ENCODE measurements at regions of chr5 and their contacts with region 1.

Region 1: GRCh38 chr5:31186672-31187267 is 6.7 kb upstream of the CDH6 start:
- H3K4me3 ChIP-seq: no peak overlapping the region
- H3K27ac ChIP-seq: no peak overlapping the region
- H3K4me1 ChIP-seq: no peaks in the 10 kb centered on the region
- CTCF ChIP-seq: no peak

Region 2: DNA sequence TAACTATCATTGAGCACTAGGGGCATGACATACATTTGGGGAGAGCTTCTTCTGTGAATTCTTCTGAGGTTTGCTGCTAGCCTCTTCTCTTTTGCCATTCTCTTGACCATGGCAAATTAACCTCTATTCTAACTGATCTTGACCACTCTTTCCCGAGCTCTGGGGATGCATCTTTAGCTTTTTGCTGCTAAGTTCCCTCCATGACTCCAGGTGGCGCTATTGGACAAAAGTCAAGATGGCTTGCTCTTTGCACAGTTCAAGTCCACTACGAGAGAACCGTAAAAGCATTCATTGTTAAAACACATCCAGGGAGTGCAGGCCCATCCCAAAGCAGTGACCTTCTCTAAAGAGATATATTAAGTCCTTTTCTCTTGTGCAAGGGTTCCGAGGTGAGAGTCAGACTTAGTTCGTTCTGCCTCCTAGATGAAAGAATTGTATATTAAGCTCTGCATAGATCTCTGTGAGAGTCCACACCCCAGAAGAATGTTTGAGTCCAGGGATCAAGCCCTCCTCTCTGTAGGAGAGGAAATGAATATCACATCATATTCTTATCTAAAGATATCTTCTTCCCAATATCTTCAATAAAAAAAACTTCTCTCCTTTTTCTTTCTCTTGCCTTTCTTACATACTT is 1146.2 kb before region 1 on chr5:
- CTCF ChIA-PET with region 1: interaction called, 10 read pairs
- POLR2A ChIA-PET with region 1: no interaction called
- H3K4me3 ChIP-seq: no peak overlapping the region
- H3K27ac ChIP-seq: no peak overlapping the region
- H3K4me1 ChIP-seq: no peaks in the 10 kb centered on the region
- CTCF ChIP-seq: peak; percentile 59; the same call in 1 of the 2 replicates

Region 3: DNA sequence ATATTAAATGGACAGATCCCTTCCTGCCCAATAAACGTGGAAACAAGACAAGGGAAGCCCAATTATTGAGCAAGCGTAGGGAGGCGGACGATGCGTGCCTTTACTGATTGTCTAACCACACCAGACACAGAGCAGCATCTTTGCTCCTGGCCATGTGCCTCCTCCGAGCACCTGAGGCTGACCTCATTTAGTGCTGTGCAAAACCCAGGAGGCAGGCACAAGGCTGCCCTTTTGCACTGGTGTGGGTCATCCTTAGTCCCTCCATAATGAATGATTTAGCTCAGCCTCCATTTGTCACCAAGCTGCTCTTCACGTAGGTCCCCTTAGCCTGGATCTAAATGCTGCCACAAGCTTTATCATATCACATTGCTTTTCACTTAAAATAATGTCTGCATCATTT is 17.4 kb before region 1 on chr5:
- CTCF ChIA-PET with region 1: interaction called, 12 read pairs
- POLR2A ChIA-PET with region 1: no interaction called
- H3K4me3 ChIP-seq: no peak overlapping the region
- H3K27ac ChIP-seq: no peak overlapping the region
- H3K4me1 ChIP-seq: no peaks in the 10 kb centered on the region
- CTCF ChIP-seq: no peak

Measured in HEK293 (cell line).